BJ (cell line): ENCODE measurements at regions of chr1 and their contacts with region 1.

Region 1: DNA sequence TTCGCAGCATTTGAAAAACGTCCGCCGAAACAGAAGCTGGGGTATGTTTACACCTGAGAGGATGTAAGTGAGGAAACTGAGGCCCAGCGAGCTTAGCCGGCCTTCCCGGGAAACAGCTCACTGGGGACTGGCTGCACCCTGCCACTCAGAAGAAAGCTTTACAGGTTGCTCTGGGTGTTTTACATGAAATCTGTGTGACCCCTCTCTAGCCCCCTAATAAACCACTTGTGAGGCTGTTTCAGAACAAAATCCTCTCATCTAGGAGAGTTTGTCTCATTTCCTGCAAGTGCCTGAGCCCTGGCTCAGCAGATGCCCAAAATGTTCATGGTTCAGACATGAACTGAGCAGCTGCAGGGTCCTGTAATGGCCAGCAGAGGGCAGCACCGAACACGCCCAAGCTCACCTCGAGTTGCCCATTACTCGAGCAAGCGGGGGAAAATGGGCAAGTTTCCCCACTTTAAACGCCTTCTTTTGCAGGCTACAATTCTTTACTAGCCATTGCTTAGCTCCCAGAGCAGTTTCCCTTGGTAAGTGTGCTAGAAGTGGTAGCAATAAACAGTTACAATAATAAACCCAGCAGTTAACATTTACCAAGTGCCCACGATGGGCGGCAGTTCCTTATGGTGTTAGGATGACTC is 76.4 kb downstream of the FHAD1 start:
- DNase-seq: no peak
- H3K4me3 ChIP-seq: no peak overlapping the region
- H3K27me3 ChIP-seq: peaks cover 1% of the 10 kb centered on the region; the same call in 1 of the 2 replicates
- CTCF ChIP-seq: peak; percentile 97

Region 2: GRCh38 chr1:15028102-15028501 is 295.4 kb before region 1 on chr1:
- CTCF ChIA-PET with region 1: no interaction called
- POLR2A ChIA-PET with region 1: no interaction called
- DNase-seq: peak; percentile 74
- H3K4me3 ChIP-seq: no peak overlapping the region
- H3K27me3 ChIP-seq: no peaks in the 10 kb centered on the region
- CTCF ChIP-seq: no peak

Region 3: DNA sequence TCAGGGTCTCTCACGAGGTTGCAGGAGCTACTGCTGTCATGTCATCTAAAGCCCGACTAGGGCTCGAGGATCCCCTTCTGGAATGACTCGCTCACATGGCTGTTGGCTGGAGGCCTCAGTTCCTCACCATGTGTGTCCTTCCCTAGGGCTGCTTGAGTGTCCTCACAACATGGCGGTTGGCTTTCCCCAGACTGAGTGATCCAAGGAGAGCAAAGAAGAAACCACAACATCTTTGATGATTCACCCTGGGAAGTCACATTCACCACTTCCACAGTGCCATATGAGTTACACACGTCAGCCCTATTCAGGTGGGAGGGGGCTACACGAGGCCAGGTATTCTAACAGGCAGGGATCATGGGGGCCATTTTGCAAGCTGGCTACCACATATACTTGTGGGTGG is 11.6 kb before region 1 on chr1:
- CTCF ChIA-PET with region 1: interaction called, 18 read pairs
- POLR2A ChIA-PET with region 1: no interaction called
- DNase-seq: no peak
- H3K4me3 ChIP-seq: no peak overlapping the region
- H3K27me3 ChIP-seq: peaks cover 4% of the 10 kb centered on the region
- CTCF ChIP-seq: no peak

Region 4: GRCh38 chr1:15345711-15346355 is 22.4 kb after region 1 on chr1:
- CTCF ChIA-PET with region 1: no interaction called
- POLR2A ChIA-PET with region 1: no interaction called
- DNase-seq: no peak
- H3K4me3 ChIP-seq: no peak overlapping the region
- H3K27me3 ChIP-seq: no peaks in the 10 kb centered on the region
- CTCF ChIP-seq: no peak

Region 5: DNA sequence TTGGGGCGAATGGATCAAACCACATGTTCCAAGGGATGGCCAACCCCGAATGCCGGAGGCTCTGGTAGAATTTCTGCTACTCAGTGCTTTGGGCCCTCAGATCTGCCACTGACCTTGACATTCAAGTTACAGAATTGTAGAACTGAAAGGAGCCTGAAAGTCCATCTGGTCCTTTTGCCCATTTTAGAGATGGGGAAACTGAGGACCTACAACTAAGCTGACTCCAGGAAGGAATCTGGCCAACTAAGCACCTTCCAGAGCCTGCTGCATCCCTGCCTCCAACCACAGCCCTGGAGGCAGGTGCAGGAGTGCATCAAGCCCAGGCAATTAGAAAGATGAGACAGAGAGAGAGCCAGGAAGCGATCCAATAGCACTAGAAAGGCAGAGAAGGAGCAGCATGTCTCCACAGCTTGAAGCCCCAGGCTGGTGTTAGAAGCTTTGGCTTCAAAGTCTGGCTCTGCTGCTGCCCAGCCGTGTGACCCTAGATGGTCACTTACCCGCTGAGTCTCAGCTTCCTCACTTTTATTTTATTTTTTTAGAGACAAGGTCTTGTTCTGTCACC is 113.5 kb after region 1 on chr1:
- CTCF ChIA-PET with region 1: interaction called, 242 read pairs
- POLR2A ChIA-PET with region 1: no interaction called
- DNase-seq: no peak
- H3K4me3 ChIP-seq: no peak overlapping the region
- H3K27me3 ChIP-seq: no peaks in the 10 kb centered on the region
- CTCF ChIP-seq: no peak

Region 6: GRCh38 chr1:15500184-15501178 is 177.0 kb after region 1 on chr1:
- CTCF ChIA-PET with region 1: interaction called, 10 read pairs
- POLR2A ChIA-PET with region 1: no interaction called
- DNase-seq: no peak
- H3K4me3 ChIP-seq: no peak overlapping the region
- H3K27me3 ChIP-seq: no peaks in the 10 kb centered on the region
- CTCF ChIP-seq: no peak